CD4-positive, alpha-beta memory T cell (primary cell): ENCODE measurements at regions of chr11 and their contacts with region 1.

Region 1: DNA sequence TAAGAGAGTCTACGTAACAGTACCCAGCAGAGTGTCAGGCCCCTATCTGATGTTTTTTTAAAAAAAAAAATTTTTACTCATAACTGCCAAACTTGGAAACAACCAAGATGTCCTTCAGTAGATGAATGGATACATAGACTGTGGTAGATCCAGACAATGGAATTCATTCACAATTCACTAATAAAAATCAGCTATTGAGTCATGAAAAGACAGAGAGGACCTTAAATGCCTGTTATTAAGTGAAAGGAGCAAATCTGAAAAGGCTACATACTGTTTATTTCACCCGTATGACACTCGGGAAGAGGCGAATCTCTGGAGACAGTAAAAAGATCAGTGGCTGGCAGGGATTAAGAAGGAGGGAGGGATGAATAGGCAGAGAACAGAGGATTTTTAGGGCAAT is 541.4 kb upstream of the TENM4 start:
- DNase-seq: no peak
- H3K4me3 ChIP-seq: no peak overlapping the region
- H3K4me3 Mint-ChIP-seq: no peak overlapping the region
- H3K27ac ChIP-seq: no peak overlapping the region
- H3K27ac Mint-ChIP-seq: no peak overlapping the region
- H3K4me1 ChIP-seq: no peaks in the 10 kb centered on the region
- H3K4me1 Mint-ChIP-seq: no peaks in the 10 kb centered on the region
- H3K27me3 ChIP-seq: no peaks in the 10 kb centered on the region
- H3K27me3 Mint-ChIP-seq: no peaks in the 10 kb centered on the region

Region 2: DNA sequence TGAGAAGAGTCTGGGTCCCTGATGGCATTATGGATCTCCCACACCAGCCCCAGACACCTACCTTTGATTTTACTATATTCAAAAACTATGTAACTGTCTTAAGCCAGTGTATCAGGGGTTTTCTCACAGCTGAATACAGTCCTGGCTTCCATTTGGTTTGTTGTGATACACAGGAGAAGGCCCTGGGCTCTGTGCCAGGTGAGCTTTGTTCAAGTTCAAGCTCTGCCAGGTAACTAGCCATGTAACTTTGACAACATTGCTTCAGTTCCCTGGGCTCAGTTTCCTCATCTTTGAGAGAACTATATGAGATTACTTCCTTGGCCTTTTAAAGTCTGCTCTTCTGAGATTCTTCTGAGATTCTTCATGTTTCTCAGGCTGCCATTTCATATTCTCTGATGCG is 213.8 kb before region 1 on chr11:
- CTCF ChIA-PET with region 1: no interaction called
- POLR2A ChIA-PET with region 1: no interaction called
- intact Hi-C with region 1: no loop called
- DNase-seq: no peak
- H3K4me3 ChIP-seq: no peak overlapping the region
- H3K4me3 Mint-ChIP-seq: no peak overlapping the region
- H3K27ac ChIP-seq: no peak overlapping the region
- H3K27ac Mint-ChIP-seq: no peak overlapping the region
- H3K4me1 ChIP-seq: no peaks in the 10 kb centered on the region
- H3K4me1 Mint-ChIP-seq: no peaks in the 10 kb centered on the region
- H3K27me3 ChIP-seq: no peaks in the 10 kb centered on the region
- H3K27me3 Mint-ChIP-seq: no peaks in the 10 kb centered on the region

Region 3: GRCh38 chr11:79845002-79845709 is 137.0 kb before region 1 on chr11:
- CTCF ChIA-PET with region 1: no interaction called
- POLR2A ChIA-PET with region 1: no interaction called
- intact Hi-C with region 1: no loop called
- DNase-seq: no peak
- H3K4me3 ChIP-seq: no peak overlapping the region
- H3K4me3 Mint-ChIP-seq: no peak overlapping the region
- H3K27ac ChIP-seq: no peak overlapping the region
- H3K27ac Mint-ChIP-seq: no peak overlapping the region
- H3K4me1 ChIP-seq: no peaks in the 10 kb centered on the region
- H3K4me1 Mint-ChIP-seq: no peaks in the 10 kb centered on the region
- H3K27me3 ChIP-seq: no peaks in the 10 kb centered on the region
- H3K27me3 Mint-ChIP-seq: no peaks in the 10 kb centered on the region

Region 4: GRCh38 chr11:79925570-79925969 is 56.6 kb before region 1 on chr11:
- CTCF ChIA-PET with region 1: no interaction called
- POLR2A ChIA-PET with region 1: no interaction called
- intact Hi-C with region 1: loop called (anchors 10 kb)
- DNase-seq: no peak
- H3K4me3 ChIP-seq: no peak overlapping the region
- H3K4me3 Mint-ChIP-seq: no peak overlapping the region
- H3K27ac ChIP-seq: no peak overlapping the region
- H3K27ac Mint-ChIP-seq: no peak overlapping the region
- H3K4me1 ChIP-seq: no peaks in the 10 kb centered on the region
- H3K4me1 Mint-ChIP-seq: no peaks in the 10 kb centered on the region
- H3K27me3 ChIP-seq: no peaks in the 10 kb centered on the region
- H3K27me3 Mint-ChIP-seq: no peaks in the 10 kb centered on the region